Activated B cell treated with CpG ODN at 0.5 μM for 24 hours (primary cell): ENCODE measurements at regions of chr3 and their contacts with region 1.

Region 1: DNA sequence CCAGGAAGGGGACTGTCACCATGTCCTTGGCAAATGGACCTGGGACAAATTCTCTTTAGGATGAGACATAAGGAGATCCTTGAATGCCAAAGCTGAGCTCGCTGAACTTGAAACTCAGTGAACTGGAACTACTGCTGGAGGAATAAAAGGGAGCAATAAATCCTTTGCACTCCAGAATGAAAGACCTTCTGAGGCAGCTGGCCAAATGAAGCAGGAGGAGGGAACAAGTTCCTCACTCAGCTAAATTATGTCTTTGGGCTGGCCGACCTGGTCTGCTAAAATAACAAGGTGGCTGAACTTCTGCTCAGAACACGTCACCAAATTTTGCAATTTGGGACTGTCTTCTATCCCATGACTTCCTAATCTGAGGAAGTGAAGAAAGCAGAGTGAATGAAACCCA is 314.7 kb downstream of the LPP start:
- DNase-seq: no peak
- ATAC-seq: no peak
- H3K4me3 Mint-ChIP-seq: no peak overlapping the region
- H3K27ac Mint-ChIP-seq: no peak overlapping the region
- H3K4me1 Mint-ChIP-seq: peaks cover 30% of the 10 kb centered on the region
- H3K27me3 Mint-ChIP-seq: no peaks in the 10 kb centered on the region
- CTCF ChIP-seq: no peak

Region 2: DNA sequence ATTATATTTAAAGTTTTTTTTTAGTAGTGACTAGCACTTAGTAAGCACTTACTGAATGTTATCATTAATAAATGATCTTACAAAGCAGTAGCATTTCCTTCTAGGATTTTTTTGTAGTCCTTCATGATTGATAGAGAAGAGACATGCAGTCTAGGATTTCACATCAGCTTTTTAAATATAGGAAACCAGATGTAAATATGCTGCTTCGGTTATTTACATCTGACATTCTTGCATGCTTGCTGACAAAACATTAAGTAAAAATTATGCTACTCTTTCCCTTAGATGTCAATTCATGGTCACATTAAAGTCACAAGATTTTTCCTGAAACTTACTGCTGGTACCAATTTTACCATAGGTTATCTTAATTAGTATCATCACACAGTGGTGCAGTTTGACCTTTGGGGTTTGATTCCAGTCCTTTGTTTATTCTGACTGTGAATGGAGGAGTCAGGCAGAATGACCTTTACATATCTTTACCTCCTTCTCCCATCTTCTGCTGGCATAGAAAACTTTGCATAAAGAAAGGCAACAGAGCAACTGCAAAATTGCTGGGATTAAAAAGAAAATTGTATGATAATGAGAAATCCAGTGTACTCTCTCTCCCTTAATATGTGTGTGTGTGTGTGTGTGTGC is 28.2 kb before region 1 on chr3:
- CTCF ChIA-PET with region 1: no interaction called
- POLR2A ChIA-PET with region 1: no interaction called
- intact Hi-C with region 1: no loop called
- DNase-seq: no peak
- ATAC-seq: no peak
- H3K4me3 Mint-ChIP-seq: no peak overlapping the region
- H3K27ac Mint-ChIP-seq: peak overlapping the region; percentile 88
- H3K4me1 Mint-ChIP-seq: peaks cover 94% of the 10 kb centered on the region
- H3K27me3 Mint-ChIP-seq: no peaks in the 10 kb centered on the region
- CTCF ChIP-seq: no peak

Region 3: DNA sequence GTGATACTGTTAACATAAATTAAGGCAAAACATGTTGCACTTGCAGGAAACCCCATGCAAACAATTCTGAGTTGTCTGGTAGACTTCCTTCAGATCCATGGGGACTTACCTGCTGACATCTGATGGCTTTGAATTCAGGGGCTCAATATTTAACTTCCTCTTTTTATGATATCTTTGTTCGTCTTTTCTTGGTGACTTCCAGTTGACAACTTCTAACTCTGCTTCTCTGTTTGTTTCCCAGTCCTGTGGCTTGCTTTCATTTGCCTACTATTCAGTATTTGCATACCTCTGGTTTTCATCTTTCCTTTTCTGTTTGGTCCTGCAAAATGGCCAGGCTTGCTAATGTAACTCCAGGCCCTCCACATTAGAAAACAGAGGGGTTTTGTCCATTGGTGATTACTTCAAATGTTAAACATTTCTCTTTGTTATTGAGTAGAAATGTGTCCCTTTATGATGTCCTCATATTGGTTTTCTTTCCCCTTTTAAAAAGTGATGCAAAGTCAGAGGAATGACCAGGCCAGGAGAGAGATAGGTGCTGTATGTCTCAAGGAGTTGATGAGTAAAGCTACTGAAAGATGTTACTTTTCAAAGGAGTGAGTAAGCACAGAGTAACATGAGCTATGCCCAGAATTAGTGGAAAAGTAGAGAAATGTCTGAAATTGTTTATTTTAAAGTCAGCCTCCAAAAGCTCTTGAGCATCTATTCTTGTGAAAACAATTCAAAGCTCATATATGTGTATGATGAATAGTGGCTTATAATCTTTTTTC is 21.2 kb after region 1 on chr3:
- CTCF ChIA-PET with region 1: no interaction called
- POLR2A ChIA-PET with region 1: interaction called, 3 read pairs
- intact Hi-C with region 1: loop called (anchors 2 kb)
- DNase-seq: no peak
- ATAC-seq: peak; percentile 88
- H3K4me3 Mint-ChIP-seq: peak overlapping the region; percentile 57
- H3K27ac Mint-ChIP-seq: peak overlapping the region; percentile 84
- H3K4me1 Mint-ChIP-seq: peaks cover 48% of the 10 kb centered on the region
- H3K27me3 Mint-ChIP-seq: no peaks in the 10 kb centered on the region
- CTCF ChIP-seq: no peak

Region 4: DNA sequence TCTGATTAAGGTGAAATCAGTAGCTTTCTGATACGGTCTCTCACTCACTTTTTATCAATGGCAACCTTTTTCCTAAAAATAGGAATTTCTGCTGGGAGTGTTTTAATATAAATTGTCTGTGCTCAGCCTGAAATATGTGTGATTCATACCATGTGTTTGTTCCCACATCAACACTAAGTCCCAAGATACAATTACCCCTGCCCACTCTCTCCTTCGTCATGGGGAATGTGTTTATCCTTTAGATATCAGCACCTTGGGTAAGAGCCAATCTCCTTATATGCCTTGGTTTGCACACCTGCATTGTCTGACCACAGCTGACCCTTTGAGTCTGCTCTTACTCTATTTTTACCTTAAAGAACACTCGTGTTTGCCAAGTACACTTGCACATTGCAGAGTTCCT is 41.7 kb after region 1 on chr3:
- CTCF ChIA-PET with region 1: no interaction called
- POLR2A ChIA-PET with region 1: interaction called, 11 read pairs
- intact Hi-C with region 1: no loop called
- DNase-seq: no peak
- ATAC-seq: no peak
- H3K4me3 Mint-ChIP-seq: no peak overlapping the region
- H3K27ac Mint-ChIP-seq: no peak overlapping the region
- H3K4me1 Mint-ChIP-seq: peaks cover 24% of the 10 kb centered on the region
- H3K27me3 Mint-ChIP-seq: no peaks in the 10 kb centered on the region
- CTCF ChIP-seq: no peak